ENCODE measurements at regions of chr6 and their contacts with region 1.

Region 1: GRCh38 chr6:710601-711571 is 17.9 kb upstream of the EXOC2 start:
- DNase-seq: peak; percentile 64
- H3K4me3 Mint-ChIP-seq: peak overlapping the region; percentile 95
- H3K27ac Mint-ChIP-seq: peak overlapping the region; percentile 99
- H3K4me1 Mint-ChIP-seq: peaks cover 44% of the 10 kb centered on the region
- H3K27me3 Mint-ChIP-seq: no peaks in the 10 kb centered on the region

Region 2: DNA sequence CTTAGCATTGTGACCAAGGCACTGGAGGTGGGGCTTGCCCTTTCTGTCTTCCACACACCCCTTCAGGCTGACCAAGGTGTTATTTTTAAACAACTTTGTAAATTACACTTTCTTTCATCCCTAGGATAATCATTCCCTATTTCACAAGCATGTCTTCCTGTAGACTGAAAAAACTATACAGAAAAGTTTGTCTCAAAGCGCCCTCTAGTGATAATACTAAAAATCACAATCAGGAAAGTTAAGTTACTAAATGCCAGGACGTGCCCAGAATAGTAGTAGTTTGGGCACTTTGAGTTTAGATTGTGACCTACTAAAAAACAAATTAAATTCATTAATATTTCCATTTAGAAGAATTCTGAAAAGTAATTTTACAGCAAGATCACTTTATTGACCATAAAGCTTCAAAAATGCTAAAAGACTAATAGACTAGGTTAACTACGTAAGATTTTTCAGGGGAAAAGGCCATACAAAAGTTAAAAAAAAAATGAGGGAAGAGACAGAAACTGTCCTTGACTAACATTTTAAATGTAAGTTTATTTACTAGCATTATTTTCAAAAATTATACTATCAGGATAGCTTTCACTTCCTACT is 541.9 kb before region 1 on chr6:
- intact Hi-C with region 1: no loop called
- DNase-seq: no peak
- H3K4me3 Mint-ChIP-seq: no peak overlapping the region
- H3K27ac Mint-ChIP-seq: no peak overlapping the region
- H3K4me1 Mint-ChIP-seq: no peaks in the 10 kb centered on the region
- H3K27me3 Mint-ChIP-seq: peaks cover 17% of the 10 kb centered on the region

Region 3: GRCh38 chr6:548517-548916 is 162.4 kb before region 1 on chr6:
- intact Hi-C with region 1: loop called (anchors 1 kb)
- DNase-seq: peak; percentile 43
- H3K4me3 Mint-ChIP-seq: peak overlapping the region; percentile 72
- H3K27ac Mint-ChIP-seq: peak overlapping the region; percentile 95
- H3K4me1 Mint-ChIP-seq: peaks cover 75% of the 10 kb centered on the region
- H3K27me3 Mint-ChIP-seq: no peaks in the 10 kb centered on the region

Region 4: DNA sequence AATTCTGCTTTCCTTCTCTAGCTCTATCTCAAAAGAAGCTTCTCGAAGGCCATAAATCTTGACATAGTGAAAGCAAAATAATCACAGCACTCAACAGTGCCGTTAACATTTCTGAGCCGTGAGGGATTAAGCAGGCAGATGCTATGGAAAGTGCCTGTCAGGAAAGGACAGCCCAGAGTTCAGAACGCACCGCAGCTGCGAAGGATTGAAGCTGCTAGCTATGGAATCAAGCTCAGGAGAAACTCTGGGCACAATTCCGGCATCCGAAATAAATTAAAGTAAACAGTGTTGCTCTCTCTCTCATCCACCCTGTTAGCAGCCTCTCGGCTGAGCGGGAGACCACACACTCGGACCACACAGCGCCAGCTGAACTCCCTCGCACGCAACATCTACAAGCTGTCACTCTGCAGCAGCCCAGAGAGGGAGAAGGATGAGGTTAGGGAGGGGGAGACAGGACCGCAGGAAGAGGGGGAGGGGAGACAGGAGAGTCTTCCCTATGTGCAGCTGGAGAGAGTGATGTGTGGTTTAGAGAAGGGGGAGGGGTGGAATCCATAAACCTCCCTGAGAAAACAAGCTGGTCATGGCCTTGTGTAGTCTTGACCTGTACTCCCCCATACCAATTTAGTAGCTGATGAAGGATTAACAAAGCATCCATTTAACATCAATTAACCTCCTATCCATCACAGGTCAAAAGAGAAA is 27.0 kb before region 1 on chr6:
- intact Hi-C with region 1: loop called (anchors 1 kb)
- DNase-seq: no peak
- H3K4me3 Mint-ChIP-seq: peak overlapping the region; percentile 41
- H3K27ac Mint-ChIP-seq: peak overlapping the region; percentile 16
- H3K4me1 Mint-ChIP-seq: peaks cover 47% of the 10 kb centered on the region
- H3K27me3 Mint-ChIP-seq: no peaks in the 10 kb centered on the region

Region 5: DNA sequence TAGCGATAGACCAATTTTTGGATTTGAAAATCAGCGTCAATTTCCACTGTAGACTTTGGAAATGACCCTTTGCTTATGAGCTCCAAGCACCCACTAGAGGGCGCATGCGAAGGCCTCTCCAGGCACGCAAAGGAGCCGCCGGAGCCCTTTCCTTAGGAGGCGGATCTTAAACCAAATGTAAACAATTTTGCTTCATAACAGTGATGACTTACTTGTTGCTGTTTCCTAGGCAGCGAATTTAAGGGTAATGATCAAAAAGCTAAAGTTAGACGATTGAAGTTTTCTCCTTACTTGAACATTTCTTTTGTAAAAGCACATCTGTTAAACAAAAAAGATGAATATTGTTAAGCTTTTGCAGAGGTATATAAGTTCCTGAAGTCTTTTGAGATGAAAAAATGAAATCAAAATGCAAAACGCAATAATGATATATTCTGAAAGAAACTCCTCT is 11.2 kb after region 1 on chr6:
- intact Hi-C with region 1: loop called (anchors 1 kb)
- DNase-seq: peak; percentile 52
- H3K4me3 Mint-ChIP-seq: no peak overlapping the region
- H3K27ac Mint-ChIP-seq: no peak overlapping the region
- H3K4me1 Mint-ChIP-seq: no peaks in the 10 kb centered on the region
- H3K27me3 Mint-ChIP-seq: peaks cover 8% of the 10 kb centered on the region

Measured in activated T-helper 1 cell treated with anti-CD3 and anti-CD28 coated beads, Interleukin-12 subunit alpha, Interleukin-12 subunit beta, Interleukin-2, Interleukin-4 antibody, amounts not matched to agents 30 ng/mL and 10 ng/mL and 1 ng/mL, durations not matched to agents 14 hours and 24 hours and 36 hours (primary cell).